ENCODE measurements at regions of chr9 and their contacts with region 1.

Region 1: GRCh38 chr9:37036776-37037502 is 2.9 kb upstream of the PAX5 start:
- DNase-seq: peak; percentile 65
- ATAC-seq: peak; percentile 31
- H3K4me3 Mint-ChIP-seq: peak overlapping the region; percentile 90
- H3K27ac Mint-ChIP-seq: peak overlapping the region; percentile 96
- H3K4me1 Mint-ChIP-seq: peaks cover 65% of the 10 kb centered on the region
- H3K27me3 Mint-ChIP-seq: no peaks in the 10 kb centered on the region
- CTCF ChIP-seq: no peak

Region 2: DNA sequence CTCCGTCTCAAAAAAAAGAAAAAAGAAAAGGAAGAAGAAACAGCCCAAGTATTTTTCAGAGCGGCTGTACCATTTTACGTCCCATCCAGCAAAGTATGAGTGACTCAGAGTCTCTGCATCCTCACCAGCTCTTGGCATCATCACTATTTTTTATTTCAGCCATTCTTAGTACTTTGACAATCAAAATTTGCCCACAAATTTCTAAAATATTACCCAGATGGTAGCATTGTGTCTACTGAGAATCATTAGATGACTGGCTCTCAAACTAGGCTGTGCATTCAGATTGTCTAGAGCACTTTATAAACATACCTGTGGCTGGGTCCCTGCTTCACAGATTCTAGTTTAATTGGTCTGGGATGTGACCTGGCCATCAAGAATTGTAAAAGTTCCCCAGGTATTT is 485.8 kb before region 1 on chr9:
- CTCF ChIA-PET with region 1: no interaction called
- POLR2A ChIA-PET with region 1: no interaction called
- intact Hi-C with region 1: no loop called
- DNase-seq: no peak
- ATAC-seq: no peak
- H3K4me3 Mint-ChIP-seq: no peak overlapping the region
- H3K27ac Mint-ChIP-seq: no peak overlapping the region
- H3K4me1 Mint-ChIP-seq: no peaks in the 10 kb centered on the region
- H3K27me3 Mint-ChIP-seq: peaks cover 6% of the 10 kb centered on the region
- CTCF ChIP-seq: no peak

Region 3: GRCh38 chr9:37053684-37054362 is 16.9 kb after region 1 on chr9:
- CTCF ChIA-PET with region 1: no interaction called
- POLR2A ChIA-PET with region 1: interaction called, 17 read pairs
- intact Hi-C with region 1: no loop called
- DNase-seq: no peak
- ATAC-seq: no peak
- H3K4me3 Mint-ChIP-seq: no peak overlapping the region
- H3K27ac Mint-ChIP-seq: no peak overlapping the region
- H3K4me1 Mint-ChIP-seq: peaks cover 19% of the 10 kb centered on the region
- H3K27me3 Mint-ChIP-seq: no peaks in the 10 kb centered on the region
- CTCF ChIP-seq: no peak

Region 4: GRCh38 chr9:37197158-37198038 is 160.5 kb after region 1 on chr9:
- CTCF ChIA-PET with region 1: no interaction called
- POLR2A ChIA-PET with region 1: interaction called, 58 read pairs
- intact Hi-C with region 1: loop called (anchors 2 kb)
- DNase-seq: no peak
- ATAC-seq: peak; percentile 72
- H3K4me3 Mint-ChIP-seq: peak overlapping the region; percentile 64
- H3K27ac Mint-ChIP-seq: peak overlapping the region; percentile 91
- H3K4me1 Mint-ChIP-seq: peaks cover 96% of the 10 kb centered on the region
- H3K27me3 Mint-ChIP-seq: no peaks in the 10 kb centered on the region
- CTCF ChIP-seq: no peak

Region 5: GRCh38 chr9:37309136-37309535 is 272.2 kb after region 1 on chr9:
- CTCF ChIA-PET with region 1: interaction called, 4 read pairs
- POLR2A ChIA-PET with region 1: interaction called, 79 read pairs
- intact Hi-C with region 1: loop called (anchors 2 kb)
- DNase-seq: no peak
- ATAC-seq: peak; percentile 87
- H3K4me3 Mint-ChIP-seq: no peak overlapping the region
- H3K27ac Mint-ChIP-seq: peak overlapping the region; percentile 84
- H3K4me1 Mint-ChIP-seq: peaks cover 43% of the 10 kb centered on the region
- H3K27me3 Mint-ChIP-seq: no peaks in the 10 kb centered on the region
- CTCF ChIP-seq: no peak

Region 6: DNA sequence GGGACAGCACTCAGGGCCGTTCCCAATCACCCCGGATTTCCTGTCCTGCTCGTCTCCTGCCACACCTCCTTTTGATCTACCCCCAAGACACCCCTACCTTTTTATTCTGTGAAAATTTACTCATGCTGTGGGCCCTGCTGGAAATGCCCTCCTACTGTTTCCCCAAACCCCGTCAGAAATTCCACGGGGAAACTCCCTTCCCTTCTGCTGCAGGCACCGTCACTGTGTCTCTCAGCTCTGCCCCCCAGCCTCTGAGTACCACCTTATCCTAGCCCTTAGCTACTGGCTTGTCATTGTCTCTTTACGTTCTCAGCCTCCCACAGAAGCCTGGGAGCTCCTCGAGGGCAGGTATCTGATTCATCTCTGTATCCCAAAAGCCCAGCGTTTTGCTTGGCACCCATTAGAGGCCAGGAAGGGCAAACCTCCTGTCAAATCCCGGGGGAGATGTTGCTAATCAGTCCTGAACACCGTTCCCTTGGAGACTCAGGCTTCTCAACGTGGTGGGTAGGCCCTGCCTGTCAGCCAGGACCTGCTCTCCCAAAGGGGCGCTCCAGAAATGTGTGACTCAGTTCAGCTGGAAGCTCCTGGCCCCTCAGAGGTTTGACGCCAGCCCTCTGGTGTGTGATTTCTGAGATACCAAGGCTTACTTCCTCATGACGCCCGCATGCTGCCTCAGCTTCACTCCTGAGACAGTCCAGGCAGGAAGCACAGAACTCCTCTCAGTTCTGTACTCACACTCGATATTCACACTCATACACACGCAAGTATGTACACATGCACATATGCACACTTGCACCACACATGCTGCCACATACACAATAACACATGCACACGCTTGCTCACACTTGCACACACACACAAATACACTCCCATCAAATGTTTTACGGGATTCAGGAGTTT is 334.9 kb after region 1 on chr9:
- CTCF ChIA-PET with region 1: interaction called, 3 read pairs
- POLR2A ChIA-PET with region 1: interaction called, 115 read pairs
- intact Hi-C with region 1: loop called (anchors 1 kb)
- DNase-seq: peak; percentile 48
- ATAC-seq: peak; percentile 16
- H3K4me3 Mint-ChIP-seq: peak overlapping the region; percentile 57
- H3K27ac Mint-ChIP-seq: peak overlapping the region; percentile 100
- H3K4me1 Mint-ChIP-seq: peaks cover 91% of the 10 kb centered on the region
- H3K27me3 Mint-ChIP-seq: no peaks in the 10 kb centered on the region
- CTCF ChIP-seq: no peak

Region 7: GRCh38 chr9:37408933-37409710 is 372.2 kb after region 1 on chr9:
- CTCF ChIA-PET with region 1: interaction called, 6 read pairs
- POLR2A ChIA-PET with region 1: interaction called, 175 read pairs
- intact Hi-C with region 1: loop called (anchors 1 kb)
- DNase-seq: peak; percentile 85
- ATAC-seq: peak; percentile 80
- H3K4me3 Mint-ChIP-seq: peak overlapping the region; percentile 75
- H3K27ac Mint-ChIP-seq: peak overlapping the region; percentile 98
- H3K4me1 Mint-ChIP-seq: peaks cover 92% of the 10 kb centered on the region
- H3K27me3 Mint-ChIP-seq: no peaks in the 10 kb centered on the region
- CTCF ChIP-seq: no peak